Sciatic nerve (tissue), 2 donors: ENCODE measurements at regions of chr7 and their contacts with region 1.

Region 1: GRCh38 chr7:151919595-151919994 is 36.7 kb upstream of the GALNTL5 start:
- DNase-seq: no peak
- ATAC-seq: no peak

Region 2: GRCh38 chr7:151951672-151952338 is 32.2 kb after region 1 on chr7:
- intact Hi-C with region 1: loop called (anchors 1 kb)
- DNase-seq: no peak
- ATAC-seq: no peak

Region 3: GRCh38 chr7:152411389-152411788 is 491.8 kb after region 1 on chr7:
- intact Hi-C with region 1: no loop called
- DNase-seq: no peak
- ATAC-seq: peak; percentile 30